Dorsolateral prefrontal cortex (tissue), 120 donors: ENCODE measurements at regions of chr19 and their contacts with region 1.

Region 1: DNA sequence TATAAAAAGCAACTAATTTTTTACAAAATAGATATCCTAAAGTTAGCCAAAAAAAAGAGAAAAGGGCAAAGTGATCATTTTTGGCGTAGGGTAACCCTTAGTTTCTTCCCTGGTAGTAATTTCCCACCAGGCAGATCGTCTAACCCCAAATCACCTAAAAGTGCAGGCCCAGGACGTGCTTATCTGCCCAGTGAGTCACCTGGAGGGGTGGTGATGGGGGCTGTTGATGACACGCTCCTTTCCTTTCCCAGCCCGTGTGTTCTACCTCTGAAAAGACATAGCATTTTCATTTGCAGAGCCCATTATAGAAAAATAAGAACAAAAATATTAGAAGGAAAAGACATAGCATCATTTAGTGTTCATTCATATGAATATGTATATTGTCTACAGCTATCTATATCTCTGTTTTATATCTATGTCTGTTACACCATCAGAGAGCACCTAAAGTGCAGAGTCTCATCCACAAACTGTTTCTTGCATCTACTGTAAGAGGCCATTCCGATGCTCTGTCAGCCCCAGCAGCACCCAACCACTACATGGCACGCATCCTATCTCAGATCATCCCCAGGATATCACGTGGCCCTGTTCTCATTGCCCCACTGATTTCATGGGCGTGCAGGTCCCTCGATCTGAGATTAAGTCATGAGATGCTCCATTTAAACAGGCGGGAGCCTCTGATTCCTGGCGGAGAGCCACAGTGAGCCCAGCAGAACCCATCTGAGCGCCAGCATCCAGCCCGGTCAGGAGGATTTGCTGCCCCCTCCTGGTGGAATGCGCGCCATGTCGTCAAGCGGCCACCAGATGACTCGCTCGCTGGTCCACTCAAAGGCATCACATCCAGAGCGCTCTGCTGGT is 8.5 kb upstream of the LILRB3 start:
- DNase-seq: peak; percentile 85 to 93 (median 89)
- H3K4me3 ChIP-seq: peak overlapping the region in 36 of 59 donors; percentile 1 to 50 (median 24)
- H3K27ac ChIP-seq: peak overlapping the region in 9 of 59 donors; percentile 1 to 53 (median 32)
- H3K27me3 ChIP-seq: peaks cover 0 to 29% (median 0%) of the 10 kb centered on the region in 45 donors
- CTCF ChIP-seq: peak; percentile 77 to 100 (median 94)

Region 2: GRCh38 chr19:53868892-53869804 is 362.2 kb before region 1 on chr19:
- intact Hi-C with region 1: no loop called
- DNase-seq: peak in 6 of 10 donors; percentile 45 to 78 (median 60)
- H3K4me3 ChIP-seq: peak overlapping the region; percentile 51 to 88 (median 73)
- H3K27ac ChIP-seq: peak overlapping the region; percentile 15 to 99 (median 95)
- H3K27me3 ChIP-seq: no peaks in the 10 kb centered on the region
- CTCF ChIP-seq: peak in 36 of 56 donors; percentile 6 to 55 (median 32)

Region 3: DNA sequence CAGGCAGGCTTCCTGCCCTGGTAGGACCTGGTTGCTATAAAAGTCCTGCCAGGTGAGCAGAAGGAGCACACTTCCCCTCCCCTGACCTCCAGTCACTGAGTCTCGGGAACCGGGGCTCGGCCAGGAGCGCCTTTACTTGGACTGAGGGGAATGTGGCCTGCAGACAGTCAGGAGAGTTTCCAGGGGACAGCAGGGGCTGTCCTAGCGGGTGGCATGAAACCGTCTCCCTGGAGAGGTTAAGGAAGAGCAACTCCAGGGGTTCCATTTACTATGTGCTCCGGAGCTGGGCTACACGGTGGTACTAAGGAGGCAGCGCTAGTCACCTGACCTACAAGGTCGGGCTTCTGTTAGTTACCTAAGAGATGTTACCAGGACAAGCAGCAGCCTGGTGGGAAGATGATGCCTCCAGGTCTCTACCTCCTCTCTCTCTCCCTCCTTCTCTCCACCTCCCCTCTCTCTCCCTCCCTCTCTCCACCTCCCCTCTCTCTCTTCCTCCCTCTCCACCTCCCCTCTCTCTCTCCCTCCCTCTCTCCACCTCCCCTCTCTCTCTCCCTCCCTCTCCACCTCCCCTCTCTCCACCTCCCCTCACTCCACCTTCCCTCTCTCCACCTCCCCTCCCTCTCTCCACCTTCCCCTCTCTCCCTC is 97.9 kb before region 1 on chr19:
- intact Hi-C with region 1: no loop called
- DNase-seq: no peak
- H3K4me3 ChIP-seq: no peak overlapping the region
- H3K27ac ChIP-seq: no peak overlapping the region
- H3K27me3 ChIP-seq: no peaks in the 10 kb centered on the region
- CTCF ChIP-seq: no peak

Region 4: DNA sequence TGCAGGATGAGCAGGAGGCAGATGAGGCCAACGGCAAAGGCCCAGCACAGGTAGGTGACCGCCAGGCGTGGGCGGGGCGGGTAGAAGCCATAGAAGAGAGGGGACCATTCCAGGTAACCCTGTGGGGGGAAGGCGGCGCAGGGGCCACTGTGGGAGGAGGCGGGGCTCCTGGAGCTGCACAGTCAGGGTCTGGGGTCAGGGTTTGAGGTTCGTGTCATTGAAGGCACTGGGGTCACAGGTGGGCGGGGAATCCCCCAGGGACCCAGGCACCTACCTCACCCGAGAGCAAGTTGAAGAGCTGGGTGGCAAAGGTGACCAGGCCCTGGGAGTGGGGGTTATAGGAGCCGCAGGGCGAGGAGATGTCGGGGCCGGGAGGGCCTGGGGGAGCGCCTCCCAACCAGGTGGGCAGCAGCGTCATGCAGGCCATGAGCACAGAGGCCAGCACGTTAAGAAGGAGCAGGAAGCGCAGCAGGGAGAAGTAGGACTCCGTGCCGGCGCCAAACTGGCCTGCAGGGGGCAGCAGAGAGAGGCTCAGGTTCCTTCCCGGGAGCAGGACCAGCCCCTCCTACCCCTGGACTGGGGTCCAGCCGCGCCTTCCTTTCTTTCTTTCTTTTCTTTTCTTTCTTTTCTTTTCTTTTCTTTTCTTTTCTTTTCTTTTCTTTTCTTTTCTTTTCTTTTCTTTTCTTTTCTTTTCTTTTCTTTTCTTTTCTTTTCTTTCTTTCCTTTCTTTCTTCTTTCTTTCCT is 63.0 kb before region 1 on chr19:
- intact Hi-C with region 1: loop called in 1 of 2 experiments (anchors 1 kb)
- DNase-seq: peak; percentile 85 to 94 (median 92)
- H3K4me3 ChIP-seq: peak overlapping the region in 2 of 59 donors; percentile 8
- H3K27ac ChIP-seq: no peak overlapping the region
- H3K27me3 ChIP-seq: peaks cover 0 to 5% (median 0%) of the 10 kb centered on the region in 45 donors
- CTCF ChIP-seq: peak; percentile 59 to 94 (median 87)

Region 5: GRCh38 chr19:54266133-54266532 is 34.8 kb after region 1 on chr19:
- intact Hi-C with region 1: no loop called
- DNase-seq: peak in 7 of 10 donors; percentile 11 to 73 (median 47)
- H3K4me3 ChIP-seq: no peak overlapping the region
- H3K27ac ChIP-seq: no peak overlapping the region
- H3K27me3 ChIP-seq: peaks cover 0 to 3% (median 0%) of the 10 kb centered on the region in 45 donors
- CTCF ChIP-seq: peak in 55 of 56 donors; percentile 20 to 76 (median 65)